Colonic mucosa (tissue), 4 donors: ENCODE measurements at regions of chr16 and their contacts with region 1.

Region 1: GRCh38 chr16:67546761-67547422 is 15.4 kb upstream of the CTCF start:
- DNase-seq: peak; percentile 88
- H3K4me3 ChIP-seq: no peak overlapping the region
- H3K27ac ChIP-seq: peak overlapping the region; percentile 14
- H3K4me1 ChIP-seq: peaks cover 5% of the 10 kb centered on the region
- H3K27me3 ChIP-seq: no peaks in the 10 kb centered on the region
- CTCF ChIP-seq: peak; percentile 97

Region 2: DNA sequence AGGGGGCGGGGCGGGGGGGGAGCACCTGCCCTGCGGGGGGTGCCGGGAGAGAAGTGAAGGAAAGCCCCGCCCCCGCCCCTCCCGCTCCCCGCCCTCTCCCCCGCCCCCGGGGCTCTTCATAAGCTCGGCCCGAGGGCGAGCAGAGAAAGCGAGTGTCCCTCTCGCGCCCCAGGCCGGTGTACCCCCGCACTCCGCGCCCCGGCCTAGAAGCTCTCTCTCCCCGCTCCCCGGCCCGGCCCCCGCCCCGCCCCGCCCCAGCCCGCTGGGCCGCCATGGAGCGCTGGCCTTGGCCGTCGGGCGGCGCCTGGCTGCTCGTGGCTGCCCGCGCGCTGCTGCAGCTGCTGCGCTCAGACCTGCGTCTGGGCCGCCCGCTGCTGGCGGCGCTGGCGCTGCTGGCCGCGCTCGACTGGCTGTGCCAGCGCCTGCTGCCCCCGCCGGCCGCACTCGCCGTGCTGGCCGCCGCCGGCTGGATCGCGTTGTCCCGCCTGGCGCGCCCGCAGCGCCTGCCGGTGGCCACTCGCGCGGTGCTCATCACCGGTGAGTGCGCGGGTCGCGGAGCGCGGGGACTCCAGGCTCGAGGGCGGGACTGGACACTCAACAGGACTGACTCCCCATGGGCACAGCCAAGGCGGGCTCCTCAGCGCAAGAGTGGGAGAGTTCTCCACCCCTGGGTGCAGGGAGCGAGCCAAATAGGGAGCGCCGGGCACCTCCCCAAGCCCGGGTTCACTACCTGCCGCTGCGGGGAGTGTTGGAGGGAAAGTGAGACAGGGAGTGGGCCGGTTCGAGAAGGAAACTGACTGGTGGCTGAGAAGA is 115.7 kb before region 1 on chr16 and contains the start of gene HSD11B2:
- intact Hi-C with region 1: no loop called
- DNase-seq: peak; percentile 87
- H3K4me3 ChIP-seq: peak within 1 kb of the TSS; percentile 52
- H3K27ac ChIP-seq: peak within 1 kb of the TSS; percentile 87
- H3K4me1 ChIP-seq: peaks cover 3% of the 10 kb centered on the region
- H3K27me3 ChIP-seq: no peaks in the 10 kb centered on the region
- CTCF ChIP-seq: no peak
- total RNA-seq, gene HSD11B2: 348 to 378 TPM

Region 3: GRCh38 chr16:67598527-67598926 is 51.6 kb after region 1 on chr16:
- intact Hi-C with region 1: no loop called
- DNase-seq: no peak
- H3K4me3 ChIP-seq: no peak overlapping the region
- H3K27ac ChIP-seq: no peak overlapping the region
- H3K4me1 ChIP-seq: no peaks in the 10 kb centered on the region
- H3K27me3 ChIP-seq: no peaks in the 10 kb centered on the region
- CTCF ChIP-seq: no peak

Region 4: GRCh38 chr16:67659648-67660563 is 113.0 kb after region 1 on chr16 and contains the start of gene ACD:
- intact Hi-C with region 1: loop called (anchors 10 kb)
- DNase-seq: peak; percentile 95
- H3K4me3 ChIP-seq: peak within 1 kb of the TSS; percentile 90
- H3K27ac ChIP-seq: peak within 1 kb of the TSS; percentile 90
- H3K4me1 ChIP-seq: peaks cover 12% of the 10 kb centered on the region
- H3K27me3 ChIP-seq: peaks cover 3% of the 10 kb centered on the region
- CTCF ChIP-seq: no peak
- total RNA-seq, gene ACD: 11.8 to 27.5 TPM